HEK293T (cell line): ENCODE measurements at regions of chr19 and their contacts with region 1.

Region 1: DNA sequence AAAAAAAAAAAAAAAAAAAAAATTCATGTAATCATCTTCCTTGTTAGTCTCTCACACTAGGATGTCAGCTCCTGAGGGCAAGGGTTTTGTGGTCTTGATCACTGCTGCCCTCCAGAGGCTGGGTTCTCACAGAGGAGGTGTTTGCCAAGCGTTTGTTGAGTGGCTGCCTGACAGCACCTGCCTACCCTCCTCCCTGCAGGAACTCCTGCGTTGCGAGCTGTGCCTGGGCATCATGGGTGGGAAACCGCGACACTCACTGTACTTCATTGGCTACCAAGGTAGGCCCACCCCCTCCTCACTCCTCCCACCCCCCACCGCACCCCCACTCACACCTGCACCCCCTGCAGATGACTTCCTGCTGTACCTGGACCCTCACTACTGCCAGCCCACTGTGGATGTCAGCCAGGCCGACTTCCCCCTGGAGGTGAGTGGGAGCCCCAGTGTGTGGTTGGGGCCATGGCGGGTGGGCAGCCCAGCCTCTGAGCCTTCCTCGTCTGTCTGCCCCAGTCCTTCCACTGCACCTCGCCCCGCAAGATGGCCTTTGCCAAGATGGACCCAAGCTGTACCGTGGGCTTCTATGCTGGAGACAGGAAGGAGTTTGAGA is 8.1 kb downstream of the ATG4D start:
- DNase-seq: peak; percentile 45

Region 2: DNA sequence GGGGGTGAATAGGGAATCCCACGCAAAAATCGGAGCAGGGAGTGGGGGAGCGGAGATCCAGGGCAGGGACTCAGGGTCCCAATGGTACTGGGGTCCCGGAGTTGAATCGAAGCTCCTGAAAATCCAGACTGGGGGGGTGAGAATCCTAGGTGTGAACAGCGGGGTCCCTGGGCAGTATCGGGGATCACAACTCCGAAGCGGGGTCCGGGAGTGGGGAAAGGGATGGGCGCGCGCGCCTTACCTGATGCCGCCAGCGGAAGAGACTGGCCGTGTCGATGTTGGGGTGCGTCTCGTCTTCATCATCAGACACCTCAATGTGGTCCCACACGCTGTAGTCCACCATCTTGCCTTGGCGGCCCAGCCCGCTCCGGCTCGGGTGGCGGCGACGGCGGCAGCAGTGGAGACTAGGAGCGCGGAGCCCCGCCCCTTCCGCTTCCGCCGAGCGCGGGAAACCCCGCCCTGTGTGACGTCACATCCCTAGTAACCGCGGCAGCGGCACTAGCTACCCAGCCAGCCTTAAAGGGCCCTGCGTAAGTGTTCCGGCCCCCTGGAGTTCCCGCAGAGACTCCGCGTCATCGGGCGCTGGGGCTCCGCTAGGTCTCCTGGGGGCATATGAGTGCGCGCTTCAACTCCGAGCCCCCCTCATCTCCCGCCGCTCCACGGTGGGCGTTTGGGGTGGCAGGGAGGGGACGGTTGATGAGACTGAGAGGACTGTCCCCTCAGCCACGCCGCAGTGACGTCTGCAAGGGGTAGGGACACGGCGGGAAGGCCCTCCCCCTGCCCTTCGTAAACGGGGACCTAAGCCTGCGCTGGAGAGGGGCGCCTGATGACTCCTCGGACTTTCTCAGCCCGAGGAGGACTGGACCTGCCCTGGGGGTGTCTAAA is 148.4 kb before region 1 on chr19 and contains the start of gene CDC37:
- CTCF ChIA-PET with region 1: no interaction called
- POLR2A ChIA-PET with region 1: no interaction called
- DNase-seq: peak; percentile 99

Region 3: DNA sequence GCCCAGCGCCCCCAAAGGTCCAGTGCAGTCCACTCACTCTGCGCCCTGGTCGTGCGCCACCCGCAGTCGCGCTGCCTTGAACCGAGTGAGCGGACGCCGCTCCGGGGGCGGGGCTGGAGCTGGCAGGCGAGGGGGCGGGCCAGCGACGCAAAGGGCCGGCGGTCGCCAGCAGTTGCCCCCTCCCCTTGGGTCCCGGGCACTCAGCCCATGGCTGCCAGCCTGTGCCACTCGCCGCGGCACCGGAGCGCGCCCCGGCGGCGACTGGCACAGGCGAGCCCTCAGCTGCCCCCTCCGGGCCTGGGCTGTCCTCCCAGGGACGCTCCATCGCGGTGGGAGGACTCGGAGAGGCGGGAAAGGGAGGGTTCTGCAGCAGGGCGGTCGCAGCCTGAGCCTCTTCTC is 34.4 kb before region 1 on chr19 and contains the start of gene S1PR5:
- CTCF ChIA-PET with region 1: no interaction called
- POLR2A ChIA-PET with region 1: no interaction called
- DNase-seq: peak; percentile 53

Region 4: GRCh38 chr19:10568826-10569651 is 17.2 kb after region 1 on chr19 and contains the start of gene CDKN2D:
- CTCF ChIA-PET with region 1: no interaction called
- POLR2A ChIA-PET with region 1: interaction called, 20 read pairs
- DNase-seq: peak; percentile 83

Region 5: GRCh38 chr19:10580979-10581631 is 29.3 kb after region 1 on chr19:
- CTCF ChIA-PET with region 1: no interaction called
- POLR2A ChIA-PET with region 1: no interaction called
- DNase-seq: peak; percentile 82

Region 6: GRCh38 chr19:10828981-10829821 is 277.4 kb after region 1 on chr19:
- CTCF ChIA-PET with region 1: no interaction called
- POLR2A ChIA-PET with region 1: no interaction called
- DNase-seq: no peak